AG04449 (cell line): ENCODE measurements at regions of chr7 and their contacts with region 1.

Region 1: GRCh38 chr7:142405122-142405765 is 147.4 kb upstream of the PRSS58 start:
- DNase-seq: peak; percentile 50
- H3K4me3 ChIP-seq: no peak overlapping the region
- CTCF ChIP-seq: peak; percentile 8

Region 2: DNA sequence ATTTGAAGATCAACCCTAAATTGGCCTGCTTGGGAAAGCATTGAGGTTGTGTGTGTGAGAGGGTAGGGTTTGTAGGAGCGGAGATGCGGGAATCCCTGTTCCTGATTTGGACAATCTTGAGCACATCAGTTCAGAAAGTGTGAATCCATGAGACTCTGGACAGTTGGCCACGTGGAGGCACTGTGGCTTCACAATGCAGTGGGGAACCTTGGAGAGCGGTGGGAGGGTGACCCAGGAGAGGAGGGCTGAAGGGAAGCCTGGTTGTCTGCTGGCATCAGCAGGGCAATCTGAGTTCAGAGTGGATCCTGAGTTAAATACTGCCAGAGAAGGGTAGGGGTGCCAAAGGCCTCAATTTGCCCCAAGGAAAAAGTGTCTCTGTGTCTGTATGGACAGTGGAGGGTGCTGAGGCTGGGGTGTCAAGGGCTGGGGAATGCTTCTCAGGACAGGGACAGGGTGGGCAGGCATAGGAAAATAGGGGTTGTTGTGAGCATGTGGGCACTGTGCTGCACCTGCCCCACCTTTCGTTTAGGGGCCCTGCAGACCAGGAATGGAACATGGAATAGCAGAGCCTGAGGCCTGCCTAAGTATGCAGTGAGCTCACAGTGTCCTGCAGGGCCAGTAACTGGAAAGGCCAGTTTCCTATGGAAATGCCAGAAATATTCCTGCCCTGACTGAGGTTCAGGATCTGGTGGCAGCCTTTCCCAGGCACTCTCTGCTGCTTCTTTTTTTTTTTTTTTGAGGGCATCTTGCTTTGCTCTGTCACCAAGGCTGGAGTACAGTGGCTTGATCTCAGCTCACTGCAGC is 15.5 kb after region 1 on chr7:
- CTCF ChIA-PET with region 1: interaction called, 12 read pairs
- POLR2A ChIA-PET with region 1: no interaction called
- DNase-seq: no peak
- H3K4me3 ChIP-seq: no peak overlapping the region
- CTCF ChIP-seq: peak; percentile 75

Region 3: DNA sequence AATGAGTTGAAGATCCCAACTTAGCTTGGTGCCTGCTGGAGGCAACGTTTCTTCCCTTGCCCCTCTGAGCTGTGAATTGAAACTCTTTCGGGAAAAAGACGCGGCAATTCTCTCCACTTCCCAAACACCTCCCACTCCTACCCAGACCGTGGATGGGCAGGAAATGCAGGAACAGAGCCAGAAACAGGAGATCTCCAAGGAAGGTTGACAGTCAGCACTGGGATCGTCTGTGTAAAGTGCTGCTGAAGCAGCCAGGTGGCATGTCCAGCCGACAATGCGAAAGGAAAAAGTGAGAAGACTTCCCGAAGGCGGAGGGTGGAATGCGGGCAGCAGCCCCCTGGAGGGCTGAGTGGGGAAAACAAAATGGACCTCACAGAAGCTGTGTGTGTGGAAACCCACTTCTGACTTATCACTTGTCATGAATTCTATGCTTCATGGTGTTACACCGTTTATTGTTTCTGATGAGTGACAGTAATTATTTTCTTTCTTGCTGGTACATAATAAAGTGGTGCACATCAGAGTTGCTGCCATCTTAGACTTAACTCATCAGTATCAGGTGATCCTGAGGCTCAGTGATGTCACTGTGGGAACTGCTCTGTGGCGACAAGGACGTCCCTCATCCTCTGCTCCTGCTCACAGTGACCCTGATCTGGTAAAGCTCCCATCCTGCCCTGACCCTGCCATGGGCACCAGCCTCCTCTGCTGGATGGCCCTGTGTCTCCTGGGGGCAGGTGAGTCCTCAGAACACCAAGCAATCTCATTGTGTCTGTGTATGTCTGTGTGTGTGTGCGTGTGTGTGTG is 123.6 kb after region 1 on chr7:
- CTCF ChIA-PET with region 1: no interaction called
- POLR2A ChIA-PET with region 1: no interaction called
- DNase-seq: no peak
- H3K4me3 ChIP-seq: no peak overlapping the region
- CTCF ChIP-seq: no peak